Left colon (tissue), 2 donors: ENCODE measurements at regions of chr16 and their contacts with region 1.

Region 1: GRCh38 chr16:53495325-53495724 is 7.7 kb downstream of the AKTIP start:
- DNase-seq: no peak
- ATAC-seq: no peak

Region 2: GRCh38 chr16:53449632-53450517 is 45.5 kb before region 1 on chr16:
- intact Hi-C with region 1: loop called in 1 of 2 experiments (anchors 10 kb)
- DNase-seq: no peak
- ATAC-seq: no peak